HEK293 (cell line): ENCODE measurements at regions of chr20 and their contacts with region 1.

Region 1: GRCh38 chr20:51014797-51015722 is 7.8 kb downstream of the KCNG1 start:
- H3K4me3 ChIP-seq: no peak overlapping the region
- H3K27ac ChIP-seq: no peak overlapping the region
- H3K4me1 ChIP-seq: no peaks in the 10 kb centered on the region
- CTCF ChIP-seq: peak; percentile 77

Region 2: DNA sequence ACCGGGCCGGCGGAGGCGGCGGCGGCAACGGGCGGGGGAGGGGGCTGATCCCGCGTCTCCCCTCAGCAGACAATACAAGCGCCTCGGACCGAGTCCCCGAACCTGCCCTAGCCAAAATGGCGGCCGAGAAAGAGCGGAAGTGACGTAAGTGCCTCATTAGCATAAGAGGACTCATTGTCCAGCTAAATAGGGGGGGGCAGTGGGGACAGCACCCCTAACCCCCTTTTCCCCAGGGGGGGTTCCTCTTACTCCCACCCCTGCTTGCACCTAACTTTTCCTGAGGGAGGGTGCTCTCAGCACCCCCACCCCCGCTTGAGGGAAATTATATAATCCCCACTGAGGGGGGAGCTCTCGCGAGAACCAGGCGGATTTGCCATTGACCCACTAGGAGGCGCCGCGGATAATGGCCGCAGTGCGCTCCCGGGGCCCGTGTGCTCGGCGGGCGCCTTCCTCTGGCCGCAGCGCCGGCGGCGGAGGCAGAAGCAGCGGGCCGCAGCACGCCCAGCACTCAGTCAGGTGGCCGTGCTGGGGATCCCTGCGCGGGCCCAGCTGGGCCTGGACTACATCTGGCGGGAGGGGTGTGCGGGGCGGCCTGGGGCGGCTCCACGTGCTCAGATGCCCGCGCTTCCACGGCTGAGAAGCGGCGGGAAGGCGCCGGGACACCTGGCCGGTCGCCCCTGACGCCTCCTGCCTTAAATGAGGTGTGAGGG is 83.6 kb before region 1 on chr20 and contains the start of gene ADNP:
- CTCF ChIA-PET with region 1: no interaction called
- POLR2A ChIA-PET with region 1: no interaction called
- H3K4me3 ChIP-seq: peak within 1 kb of the TSS; percentile 98
- H3K27ac ChIP-seq: peak within 1 kb of the TSS; percentile 91
- H3K4me1 ChIP-seq: no peaks in the 10 kb centered on the region
- CTCF ChIP-seq: peak; percentile 82

Region 3: DNA sequence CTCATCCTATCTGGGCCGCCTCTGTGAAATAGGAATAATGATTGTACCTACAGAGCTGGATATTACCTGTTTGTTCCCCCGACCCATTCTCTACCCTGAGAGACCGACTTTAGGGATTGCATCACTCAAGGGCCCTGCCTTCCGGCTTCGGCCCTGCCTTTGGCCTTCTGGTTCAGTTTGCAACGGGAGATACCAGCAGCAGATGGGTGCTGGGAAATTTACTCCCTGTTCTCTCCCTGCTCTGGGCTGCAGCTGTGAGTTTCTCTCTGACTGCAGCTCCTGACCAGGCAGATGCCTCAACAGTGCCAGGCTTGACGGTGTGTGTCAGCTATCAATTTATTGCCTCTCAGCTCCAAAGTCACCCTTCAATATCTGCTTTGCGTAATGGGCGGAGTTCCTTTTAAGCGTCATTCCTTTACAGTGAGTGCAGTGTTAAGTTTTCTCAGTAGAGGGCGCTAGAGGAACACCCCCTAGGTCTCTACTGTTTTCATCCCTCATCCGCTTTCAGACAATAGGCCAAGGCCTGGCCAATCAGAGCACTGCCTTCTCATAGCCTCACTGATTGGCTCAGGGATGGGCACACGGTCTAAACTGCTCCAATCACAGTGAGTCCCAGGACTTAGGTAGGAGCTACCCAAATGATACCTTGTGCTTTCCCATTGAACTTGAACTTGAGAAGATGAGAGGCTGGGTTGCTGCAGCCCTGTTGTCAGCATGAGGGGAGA is 22.2 kb before region 1 on chr20:
- CTCF ChIA-PET with region 1: interaction called, 16 read pairs
- POLR2A ChIA-PET with region 1: interaction called, 8 read pairs
- H3K4me3 ChIP-seq: no peak overlapping the region
- H3K27ac ChIP-seq: no peak overlapping the region
- H3K4me1 ChIP-seq: no peaks in the 10 kb centered on the region
- CTCF ChIP-seq: peak; percentile 59

Region 4: DNA sequence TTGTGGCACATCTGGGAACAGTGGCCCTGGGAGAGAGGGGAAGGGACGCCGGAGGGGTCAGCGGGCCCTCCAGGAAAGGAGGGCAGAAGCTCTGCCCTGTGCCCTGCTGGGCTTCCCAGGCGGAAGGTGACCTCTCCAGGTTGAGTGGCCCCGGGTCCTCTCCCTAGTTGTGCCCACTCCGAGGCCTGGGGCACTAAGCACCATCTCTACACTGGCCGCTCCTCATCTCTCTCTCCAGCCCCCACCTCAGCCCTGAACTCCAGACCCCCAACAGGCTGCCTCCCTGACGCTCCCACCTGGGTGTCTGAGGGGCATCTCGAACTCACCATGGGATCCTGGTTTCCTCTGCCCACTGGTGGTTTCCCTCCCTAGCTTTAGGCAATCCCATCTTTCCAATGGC is 10.3 kb before region 1 on chr20:
- CTCF ChIA-PET with region 1: interaction called, 18 read pairs
- POLR2A ChIA-PET with region 1: no interaction called
- H3K4me3 ChIP-seq: no peak overlapping the region
- H3K27ac ChIP-seq: no peak overlapping the region
- H3K4me1 ChIP-seq: no peaks in the 10 kb centered on the region
- CTCF ChIP-seq: no peak

Region 5: DNA sequence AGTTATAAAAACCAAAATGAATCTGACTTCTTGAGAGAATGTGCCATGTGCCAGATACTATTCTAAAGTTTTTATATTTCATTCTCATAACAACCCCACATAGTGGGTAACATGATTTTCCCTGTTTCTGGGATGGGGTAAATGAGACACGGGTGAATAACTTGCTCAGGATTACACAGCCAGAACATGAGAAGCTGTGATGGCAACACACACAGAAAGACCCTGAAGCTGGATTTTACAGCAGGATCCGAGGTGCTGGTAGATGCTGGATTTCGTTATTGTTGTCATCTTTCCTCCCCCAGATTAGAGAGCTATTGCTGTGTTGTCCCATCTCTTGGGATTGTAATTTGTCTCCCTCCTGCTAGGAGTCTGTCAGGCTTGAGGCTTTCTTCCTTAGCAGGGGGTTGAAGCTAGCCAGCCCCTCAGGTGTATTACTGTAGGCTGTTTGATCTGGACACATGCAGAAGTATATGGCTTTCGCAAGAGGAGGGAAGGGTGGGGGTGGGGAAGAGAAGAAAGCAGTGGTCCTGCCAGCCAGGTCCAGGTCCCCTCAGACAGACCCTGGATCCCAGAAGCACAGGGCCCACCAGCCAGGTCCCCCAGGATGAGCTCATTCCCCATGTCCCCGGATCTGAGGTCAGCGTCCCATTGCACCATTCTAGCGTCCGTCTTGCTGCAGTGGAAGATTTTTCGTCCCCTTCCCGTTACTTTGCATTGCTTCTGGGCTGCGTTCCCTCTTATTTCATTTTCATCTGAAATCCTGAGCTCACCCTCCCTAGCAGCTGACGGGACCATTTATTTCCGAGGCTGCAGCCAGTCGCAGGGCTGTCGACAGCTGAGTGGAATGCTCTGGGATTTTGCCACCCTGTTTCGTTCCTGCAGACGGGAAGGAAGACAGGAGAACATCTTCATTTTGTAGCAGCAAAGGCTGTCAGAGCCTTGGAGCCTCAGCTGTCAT is 15.2 kb after region 1 on chr20:
- CTCF ChIA-PET with region 1: interaction called, 39 read pairs
- POLR2A ChIA-PET with region 1: no interaction called
- H3K4me3 ChIP-seq: no peak overlapping the region
- H3K27ac ChIP-seq: no peak overlapping the region
- H3K4me1 ChIP-seq: no peaks in the 10 kb centered on the region
- CTCF ChIP-seq: no peak